ENCODE measurements at regions of chr5 and their contacts with region 1.

Region 1: GRCh38 chr5:127290019-127290945 is at the start of gene MEGF10:
- DNase-seq: no peak
- H3K4me3 ChIP-seq: peak within 1 kb of the TSS; percentile 61
- H3K27ac ChIP-seq: no peak within 1 kb of the TSS
- H3K4me1 ChIP-seq: peaks cover 11% of the 10 kb centered on the region
- H3K27me3 ChIP-seq: peaks cover 76% of the 10 kb centered on the region
- CTCF ChIP-seq: peak; percentile 70
- total RNA-seq, gene MEGF10: 0.47 TPM

Region 2: DNA sequence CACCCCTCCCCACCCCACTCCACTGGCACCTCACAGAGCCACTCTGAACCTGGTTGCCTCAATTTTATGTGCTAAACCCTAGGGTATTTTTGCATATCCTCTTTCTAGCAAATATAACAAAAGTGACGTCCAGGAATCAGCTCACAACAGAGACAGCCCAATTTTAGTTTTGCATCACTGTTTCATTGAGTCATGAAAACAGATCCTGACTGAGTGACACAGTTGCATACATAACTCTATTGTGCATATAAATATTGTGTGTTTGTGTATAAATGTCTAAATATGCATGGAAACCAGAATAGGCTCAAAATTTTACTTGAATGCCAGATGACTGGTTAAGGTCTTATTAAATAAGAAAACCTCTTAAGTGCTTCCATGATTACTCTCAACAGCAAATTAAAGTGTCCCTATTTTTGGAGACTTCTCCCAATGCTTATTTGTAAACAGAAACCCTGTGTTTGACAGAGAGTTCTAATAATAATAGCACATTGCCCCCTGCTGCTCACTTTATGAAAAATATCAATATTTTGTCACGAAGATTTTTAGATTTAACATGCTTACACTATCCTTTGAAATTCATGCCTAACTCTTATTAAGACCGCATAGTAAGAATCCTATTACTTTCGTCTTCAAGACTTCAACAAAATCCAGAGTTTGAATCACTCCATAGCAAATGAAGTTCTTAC is 151.7 kb after region 1 on chr5:
- intact Hi-C with region 1: loop called (anchors 10 kb)
- DNase-seq: no peak
- H3K4me3 ChIP-seq: no peak overlapping the region
- H3K27ac ChIP-seq: no peak overlapping the region
- H3K4me1 ChIP-seq: peaks cover 4% of the 10 kb centered on the region
- H3K27me3 ChIP-seq: no peaks in the 10 kb centered on the region
- CTCF ChIP-seq: peak; percentile 39

Region 3: GRCh38 chr5:127492854-127493738 is 202.8 kb after region 1 on chr5:
- intact Hi-C with region 1: loop called (anchors 5 kb)
- DNase-seq: no peak
- H3K4me3 ChIP-seq: no peak overlapping the region
- H3K27ac ChIP-seq: no peak overlapping the region
- H3K4me1 ChIP-seq: no peaks in the 10 kb centered on the region
- H3K27me3 ChIP-seq: peaks cover 47% of the 10 kb centered on the region
- CTCF ChIP-seq: peak; percentile 71

Measured in left ventricle myocardium inferior (tissue), 1 donor.